ENCODE measurements at regions of chr2 and their contacts with region 1.

Region 1: DNA sequence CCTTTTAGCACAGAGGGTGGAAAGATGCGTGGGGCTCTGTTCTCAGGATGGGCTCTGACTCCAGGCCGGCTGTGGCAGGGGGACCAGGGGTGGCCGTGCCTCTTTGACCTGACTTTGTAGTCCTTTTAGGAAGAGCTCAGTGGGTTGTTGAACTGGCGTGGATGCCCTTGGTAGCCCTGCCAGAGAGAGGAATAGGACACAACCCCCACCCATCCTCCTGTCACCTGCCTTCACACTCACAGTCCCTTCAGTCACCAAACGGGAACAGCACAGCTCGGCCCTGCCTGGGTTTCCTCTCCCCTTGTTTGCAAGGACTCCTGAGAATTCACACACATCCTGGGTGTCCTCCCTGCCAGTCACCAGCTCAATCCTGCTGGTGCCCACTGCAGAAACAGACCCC is 20.2 kb upstream of the MRPL33 start:
- DNase-seq: no peak
- H3K4me3 ChIP-seq: no peak overlapping the region
- H3K4me3 Mint-ChIP-seq: no peak overlapping the region
- H3K27ac ChIP-seq: no peak overlapping the region
- H3K27ac Mint-ChIP-seq: no peak overlapping the region
- H3K4me1 ChIP-seq: no peaks in the 10 kb centered on the region
- H3K4me1 Mint-ChIP-seq: no peaks in the 10 kb centered on the region
- H3K27me3 ChIP-seq: no peaks in the 10 kb centered on the region
- H3K27me3 Mint-ChIP-seq: peaks cover 12 to 41% of the 10 kb centered on the region in 2 donors

Region 2: DNA sequence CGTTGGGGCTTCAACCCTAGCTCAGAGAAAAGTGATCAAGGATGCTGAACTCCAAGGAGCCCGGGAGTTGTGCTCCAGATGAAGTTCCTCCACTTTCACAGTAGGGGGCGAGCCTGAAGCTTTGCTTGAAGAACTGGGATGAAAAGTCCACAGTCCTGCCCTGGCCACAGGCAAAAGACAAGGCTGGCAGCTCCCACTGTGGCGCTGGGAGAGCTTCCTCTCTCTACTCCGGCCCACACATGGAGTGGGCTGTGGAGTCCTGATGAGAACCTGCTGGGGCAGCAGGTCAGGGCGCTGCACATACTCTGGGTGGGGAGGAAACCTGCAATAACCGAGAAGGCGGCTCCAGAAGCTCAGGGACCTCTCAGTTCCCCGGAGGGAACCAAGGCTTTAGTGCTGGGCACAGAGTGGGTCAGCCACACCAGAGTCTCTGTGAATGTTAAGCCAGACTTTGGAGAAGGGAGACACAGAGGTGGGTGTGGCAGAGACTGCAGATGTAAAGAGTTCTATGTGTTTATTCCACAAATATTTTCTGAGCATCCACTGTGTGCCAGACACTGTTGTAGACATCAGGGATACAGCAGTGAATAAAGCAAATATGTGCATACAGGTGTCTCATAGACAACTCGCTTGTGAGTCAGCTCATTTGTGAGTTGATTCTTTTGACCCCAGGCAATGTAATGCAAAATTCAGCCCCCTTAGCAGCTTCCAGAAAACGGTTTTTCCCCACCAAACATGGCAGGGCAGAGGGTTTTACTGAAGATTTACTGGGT is 27.8 kb before region 1 on chr2:
- CTCF ChIA-PET with region 1: no interaction called
- POLR2A ChIA-PET with region 1: no interaction called
- DNase-seq: peak in 1 of 5 donors; percentile 15
- H3K4me3 ChIP-seq: no peak overlapping the region
- H3K4me3 Mint-ChIP-seq: no peak overlapping the region
- H3K27ac ChIP-seq: no peak overlapping the region
- H3K27ac Mint-ChIP-seq: peak overlapping the region in 1 of 8 donors; percentile 32
- H3K4me1 ChIP-seq: no peaks in the 10 kb centered on the region
- H3K4me1 Mint-ChIP-seq: no peaks in the 10 kb centered on the region
- H3K27me3 ChIP-seq: peaks cover 8% of the 10 kb centered on the region
- H3K27me3 Mint-ChIP-seq: peaks cover 16 to 18% of the 10 kb centered on the region in 2 donors

Region 3: GRCh38 chr2:27870724-27871123 is 119.4 kb after region 1 on chr2:
- CTCF ChIA-PET with region 1: no interaction called
- POLR2A ChIA-PET with region 1: interaction called, 10 read pairs
- DNase-seq: no peak
- H3K4me3 ChIP-seq: no peak overlapping the region
- H3K4me3 Mint-ChIP-seq: no peak overlapping the region
- H3K27ac ChIP-seq: no peak overlapping the region
- H3K27ac Mint-ChIP-seq: no peak overlapping the region
- H3K4me1 ChIP-seq: no peaks in the 10 kb centered on the region
- H3K4me1 Mint-ChIP-seq: no peaks in the 10 kb centered on the region
- H3K27me3 ChIP-seq: no peaks in the 10 kb centered on the region
- H3K27me3 Mint-ChIP-seq: peaks cover 0 to 3% of the 10 kb centered on the region in 2 donors

Region 4: DNA sequence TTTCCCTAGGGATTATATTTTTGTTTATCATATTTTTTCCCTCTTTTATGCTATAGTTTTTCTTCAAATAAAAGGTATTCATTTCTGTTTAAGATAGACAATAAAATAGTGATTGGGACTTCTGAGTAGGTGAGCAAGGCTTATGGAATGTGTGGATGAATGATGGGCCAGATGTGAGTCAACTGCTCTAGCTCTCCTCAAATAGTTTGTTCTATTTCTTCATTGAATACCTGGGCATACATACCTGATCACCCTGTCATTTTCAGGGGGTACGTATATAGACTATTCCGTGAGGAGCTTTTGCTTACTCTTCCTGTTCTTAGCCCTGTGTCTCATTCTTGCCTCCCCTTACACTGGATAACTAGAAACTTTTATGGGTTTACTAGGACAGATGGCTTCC is 181.0 kb after region 1 on chr2:
- CTCF ChIA-PET with region 1: no interaction called
- POLR2A ChIA-PET with region 1: no interaction called
- DNase-seq: no peak
- H3K4me3 ChIP-seq: no peak overlapping the region
- H3K4me3 Mint-ChIP-seq: no peak overlapping the region
- H3K27ac ChIP-seq: no peak overlapping the region
- H3K27ac Mint-ChIP-seq: peak overlapping the region in 2 of 8 donors; percentile 3 to 10
- H3K4me1 ChIP-seq: no peaks in the 10 kb centered on the region
- H3K4me1 Mint-ChIP-seq: peaks cover 9 to 17% (median 13%) of the 10 kb centered on the region in 3 donors
- H3K27me3 ChIP-seq: no peaks in the 10 kb centered on the region
- H3K27me3 Mint-ChIP-seq: no peaks in the 10 kb centered on the region